Activated naive CD4-positive, alpha-beta T cell treated with anti-CD3 and anti-CD28 coated beads for 36 hours (primary cell): ENCODE measurements at regions of chrX and their contacts with region 1.

Region 1: DNA sequence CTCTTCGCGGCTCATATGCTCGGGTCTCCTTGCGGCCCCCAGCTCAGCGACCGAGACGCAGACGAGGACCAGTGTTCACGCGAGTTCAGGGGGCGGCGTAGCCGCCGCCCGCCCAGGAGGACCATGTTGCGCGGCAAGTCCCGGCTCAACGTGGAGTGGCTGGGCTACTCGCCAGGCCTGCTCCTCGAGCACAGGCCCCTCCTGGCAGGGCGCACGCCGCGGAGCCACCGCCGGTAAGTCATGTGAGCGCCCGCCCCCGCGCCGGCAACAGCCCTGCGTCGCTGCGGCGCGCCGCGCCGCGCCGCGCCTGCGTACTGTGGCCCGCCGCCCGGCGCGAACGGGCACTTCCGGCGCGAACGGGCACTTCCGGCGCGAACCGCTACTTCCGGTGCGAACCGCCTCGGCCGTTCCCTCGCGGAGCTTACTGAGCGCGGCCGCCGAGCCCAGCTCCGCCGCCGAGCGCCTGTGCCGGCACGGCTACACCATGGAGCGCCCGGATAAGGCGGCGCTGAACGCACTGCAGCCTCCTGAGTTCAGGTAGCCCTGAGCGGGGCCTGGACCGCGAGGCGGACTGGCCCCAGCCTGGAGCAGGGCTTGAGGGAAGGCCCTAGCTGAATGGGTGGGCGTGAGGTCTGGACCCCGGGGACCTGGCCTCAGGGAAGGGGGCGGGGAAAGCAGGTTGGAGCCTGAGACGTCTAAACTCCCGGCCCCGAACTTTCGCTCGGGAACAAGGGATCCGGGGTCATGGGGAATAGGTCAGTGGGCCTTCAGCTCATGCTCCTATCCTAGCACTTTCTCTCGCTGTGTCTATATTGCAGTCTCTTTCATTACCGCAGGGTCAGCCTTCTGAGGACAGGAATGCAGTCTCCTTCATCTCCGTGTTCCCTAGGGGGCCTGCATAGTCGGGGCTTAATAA is at the start of gene VMA21:
- DNase-seq: peak; percentile 81
- H3K4me3 Mint-ChIP-seq: peak within 1 kb of the TSS; percentile 87
- H3K27ac Mint-ChIP-seq: peak within 1 kb of the TSS; percentile 96
- H3K4me1 Mint-ChIP-seq: peaks cover 48% of the 10 kb centered on the region
- H3K27me3 Mint-ChIP-seq: no peaks in the 10 kb centered on the region
- total RNA-seq, gene VMA21: 36.5 to 39.7 TPM

Region 2: GRCh38 chrX:150575416-150575808 is 821.7 kb before region 1 on chrX:
- CTCF ChIA-PET with region 1: no interaction called
- intact Hi-C with region 1: loop called (anchors 5 kb)
- DNase-seq: peak; percentile 85
- H3K4me3 Mint-ChIP-seq: peak overlapping the region; percentile 62
- H3K27ac Mint-ChIP-seq: peak overlapping the region; percentile 97
- H3K4me1 Mint-ChIP-seq: peaks cover 76% of the 10 kb centered on the region
- H3K27me3 Mint-ChIP-seq: no peaks in the 10 kb centered on the region

Region 3: DNA sequence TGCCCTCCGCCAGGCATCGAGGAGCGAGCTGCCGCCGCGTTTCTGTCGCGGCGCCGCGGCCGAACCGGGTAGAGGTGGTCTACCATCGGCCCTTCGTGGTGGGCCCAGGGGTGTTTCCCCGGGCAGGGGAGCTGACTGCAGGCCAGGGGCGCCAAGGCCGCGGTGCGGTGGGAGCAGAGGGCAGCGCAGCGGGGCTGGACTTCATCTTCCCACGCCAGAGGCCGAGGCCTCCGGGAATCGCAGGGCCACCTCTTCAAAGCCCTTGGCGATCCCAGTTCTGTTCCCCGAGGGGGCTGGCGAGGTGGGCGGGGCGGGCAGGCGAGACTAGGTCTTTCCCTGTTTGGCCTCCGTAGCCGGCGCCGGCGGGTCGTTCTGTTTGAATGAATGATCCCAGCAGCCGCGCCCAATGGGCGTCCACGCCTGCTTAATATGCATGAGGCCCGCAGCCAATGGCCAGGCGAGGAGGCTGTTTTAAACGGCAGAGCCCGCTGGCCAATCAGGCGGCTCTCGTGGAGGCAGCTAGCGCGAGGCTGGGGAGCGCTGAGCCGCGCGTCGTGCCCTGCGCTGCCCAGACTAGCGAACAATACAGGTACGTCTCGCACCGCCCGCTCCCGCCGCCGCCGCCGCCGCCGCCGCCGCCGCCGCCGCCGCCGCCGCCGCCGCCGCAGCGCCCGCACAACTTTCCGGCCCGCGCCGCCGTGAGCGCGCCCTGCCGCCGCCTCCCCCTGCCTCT is 414.1 kb before region 1 on chrX and contains the start of gene HMGB3:
- CTCF ChIA-PET with region 1: no interaction called
- intact Hi-C with region 1: loop called (anchors 2 kb)
- DNase-seq: peak; percentile 90
- H3K4me3 Mint-ChIP-seq: peak within 1 kb of the TSS; percentile 69
- H3K27ac Mint-ChIP-seq: no peak within 1 kb of the TSS
- H3K4me1 Mint-ChIP-seq: peaks cover 13% of the 10 kb centered on the region
- H3K27me3 Mint-ChIP-seq: peaks cover 5% of the 10 kb centered on the region
- total RNA-seq, gene HMGB3: 30.8 to 33.9 TPM

Region 4: GRCh38 chrX:151458824-151459223 is 61.7 kb after region 1 on chrX:
- CTCF ChIA-PET with region 1: no interaction called
- intact Hi-C with region 1: no loop called
- DNase-seq: no peak
- H3K4me3 Mint-ChIP-seq: no peak overlapping the region
- H3K27ac Mint-ChIP-seq: no peak overlapping the region
- H3K4me1 Mint-ChIP-seq: no peaks in the 10 kb centered on the region
- H3K27me3 Mint-ChIP-seq: no peaks in the 10 kb centered on the region

Region 5: DNA sequence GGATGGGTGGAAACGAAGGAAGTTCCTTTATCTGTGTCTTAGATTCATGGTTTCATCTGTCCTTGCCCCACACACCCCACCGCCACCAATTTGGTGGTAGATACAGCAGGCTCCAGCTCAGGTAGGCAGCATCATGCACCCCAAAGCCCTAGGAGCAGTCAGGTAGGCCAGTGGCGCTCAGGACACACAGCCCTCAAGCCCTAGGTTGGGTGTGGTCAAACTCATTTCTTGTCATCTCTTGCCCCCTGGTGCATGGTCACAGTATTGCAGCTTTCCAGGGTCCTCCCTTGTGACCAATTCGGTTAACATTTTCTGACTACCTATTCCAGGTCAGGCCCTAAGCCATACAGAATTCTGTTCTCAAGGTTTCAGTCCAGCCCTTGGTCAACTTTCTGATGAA is 283.7 kb after region 1 on chrX:
- CTCF ChIA-PET with region 1: no interaction called
- intact Hi-C with region 1: loop called (anchors 2 kb)
- DNase-seq: peak; percentile 74
- H3K4me3 Mint-ChIP-seq: no peak overlapping the region
- H3K27ac Mint-ChIP-seq: no peak overlapping the region
- H3K4me1 Mint-ChIP-seq: no peaks in the 10 kb centered on the region
- H3K27me3 Mint-ChIP-seq: peaks cover 7% of the 10 kb centered on the region